ENCODE measurements at regions of chr3 and their contacts with region 1.

Region 1: GRCh38 chr3:187227658-187228258 is 30.5 kb downstream of the RTP1 start:
- DNase-seq: no peak
- H3K4me3 ChIP-seq: no peak overlapping the region
- CTCF ChIP-seq: no peak
- POLR2A ChIP-seq: no peak

Region 2: GRCh38 chr3:187694801-187695200 is 467.0 kb after region 1 on chr3:
- intact Hi-C with region 1: loop called (anchors 10 kb)
- DNase-seq: no peak
- H3K4me3 ChIP-seq: no peak overlapping the region
- CTCF ChIP-seq: no peak
- POLR2A ChIP-seq: no peak